ENCODE measurements at regions of chr19 and their contacts with region 1.

Region 1: GRCh38 chr19:2161688-2162053 is 2.1 kb upstream of the DOT1L start:
- DNase-seq: no peak
- H3K4me3 ChIP-seq: no peak overlapping the region
- H3K27me3 ChIP-seq: no peaks in the 10 kb centered on the region
- CTCF ChIP-seq: no peak

Region 2: GRCh38 chr19:2145831-2146241 is 15.8 kb before region 1 on chr19:
- CTCF ChIA-PET with region 1: no interaction called
- POLR2A ChIA-PET with region 1: no interaction called
- DNase-seq: no peak
- H3K4me3 ChIP-seq: no peak overlapping the region
- H3K27me3 ChIP-seq: no peaks in the 10 kb centered on the region
- CTCF ChIP-seq: no peak

Region 3: DNA sequence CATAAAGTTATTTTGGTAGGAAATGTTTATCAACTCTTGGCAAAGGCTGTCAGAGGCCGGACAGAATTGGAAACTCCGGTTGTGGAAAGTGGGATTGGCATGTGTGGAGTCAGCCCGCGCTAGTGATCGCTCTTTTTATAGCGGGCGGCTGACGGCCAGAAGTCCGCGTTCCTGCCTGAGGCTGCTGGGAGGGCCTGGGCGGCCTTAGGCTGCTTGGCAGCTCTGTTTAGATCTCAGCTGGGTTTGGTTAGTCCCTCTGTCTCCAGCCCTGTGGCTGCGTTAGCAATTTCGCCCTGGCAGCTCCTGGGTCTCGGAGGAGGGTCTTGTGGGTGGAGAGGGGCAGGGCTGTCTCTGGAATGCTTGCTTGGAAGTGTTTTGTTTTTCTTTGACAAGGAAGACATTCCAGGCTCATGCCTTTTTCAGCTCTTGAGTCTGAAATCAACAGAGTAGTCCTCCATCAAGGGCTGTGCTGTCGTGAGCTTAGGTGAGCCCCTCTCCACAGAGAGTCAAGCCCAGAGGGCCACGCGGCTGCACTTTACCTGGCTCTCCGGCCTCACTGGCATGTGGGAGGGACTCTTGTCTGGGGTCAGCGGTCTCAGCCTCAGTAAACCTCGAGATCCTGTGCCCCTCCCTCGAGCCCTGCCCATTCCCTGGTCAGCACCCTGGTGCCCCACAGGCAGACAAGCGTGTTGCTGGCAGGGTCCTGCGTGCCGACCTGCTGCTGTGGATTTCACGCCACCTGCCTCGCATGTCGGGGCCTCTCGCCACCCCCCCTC is 24.6 kb after region 1 on chr19:
- CTCF ChIA-PET with region 1: no interaction called
- POLR2A ChIA-PET with region 1: no interaction called
- DNase-seq: peak; percentile 98
- H3K4me3 ChIP-seq: no peak overlapping the region
- H3K27me3 ChIP-seq: no peaks in the 10 kb centered on the region
- CTCF ChIP-seq: no peak

Region 4: GRCh38 chr19:2602391-2603181 is 440.9 kb after region 1 on chr19:
- CTCF ChIA-PET with region 1: no interaction called
- POLR2A ChIA-PET with region 1: interaction called, 18 read pairs
- DNase-seq: peak; percentile 97
- H3K4me3 ChIP-seq: peak overlapping the region; percentile 27
- H3K27me3 ChIP-seq: no peaks in the 10 kb centered on the region
- CTCF ChIP-seq: peak; percentile 27; the same call in 1 of the 2 replicates

Measured in BJ (cell line).